ENCODE measurements at regions of chr5 and their contacts with region 1.

Region 1: GRCh38 chr5:55994574-55995333 is at the start of gene IL6ST:
- DNase-seq: peak; percentile 78
- ATAC-seq: peak; percentile 91
- H3K4me3 ChIP-seq: peak within 1 kb of the TSS; percentile 93
- H3K27ac ChIP-seq: peak within 1 kb of the TSS; percentile 93
- H3K4me1 ChIP-seq: no peaks in the 10 kb centered on the region; the same call in none of the 2 replicates
- H3K27me3 ChIP-seq: no peaks in the 10 kb centered on the region
- CTCF ChIP-seq: peak in 1 of 3 experiments; percentile 19; a peak in 1 of 6 replicates
- EP300 ChIP-seq: no peak
- POLR2A ChIP-seq: peak; percentile 88
- RAD21 ChIP-seq: no peak
- polyA plus RNA-seq, gene IL6ST: 1.5 to 1.8 TPM

Region 2: DNA sequence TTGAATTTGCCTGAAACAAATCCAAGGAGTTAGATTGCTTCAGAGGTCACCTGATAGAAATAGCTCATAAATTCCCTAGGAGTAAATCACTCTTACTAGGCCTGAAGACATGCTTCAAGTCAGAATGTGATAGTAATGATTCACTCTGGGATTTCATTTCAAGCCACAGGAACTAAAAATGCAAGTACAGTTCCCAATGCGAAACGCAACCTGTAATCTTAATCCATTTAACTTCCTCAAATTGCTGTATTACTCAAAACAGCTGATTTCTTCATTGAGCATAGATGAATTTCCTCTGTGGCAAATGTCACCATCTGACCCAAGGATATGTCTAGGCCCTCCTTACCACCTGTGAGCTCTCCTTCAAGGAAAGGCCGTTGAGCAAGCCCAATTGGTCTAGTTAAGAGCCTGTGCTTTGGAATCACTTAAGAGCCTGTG is 32.1 kb after region 1 on chr5:
- CTCF ChIA-PET with region 1: interaction called, 3 read pairs
- POLR2A ChIA-PET with region 1: interaction called, 10 read pairs
- RAD21 ChIA-PET with region 1: interaction called, 8 read pairs
- SMC1A ChIA-PET with region 1: interaction called, 3 read pairs
- in situ Hi-C with region 1: no loop called
- intact Hi-C with region 1: loop called (anchors 1 kb)
- DNase-seq: peak; percentile 89
- ATAC-seq: peak; percentile 83
- H3K4me3 ChIP-seq: no peak overlapping the region
- H3K27ac ChIP-seq: no peak overlapping the region
- H3K4me1 ChIP-seq: peaks cover 19% of the 10 kb centered on the region
- H3K27me3 ChIP-seq: no peaks in the 10 kb centered on the region
- CTCF ChIP-seq: no peak
- EP300 ChIP-seq: peak; percentile 89 to 96
- POLR2A ChIP-seq: no peak
- RAD21 ChIP-seq: no peak

Region 3: DNA sequence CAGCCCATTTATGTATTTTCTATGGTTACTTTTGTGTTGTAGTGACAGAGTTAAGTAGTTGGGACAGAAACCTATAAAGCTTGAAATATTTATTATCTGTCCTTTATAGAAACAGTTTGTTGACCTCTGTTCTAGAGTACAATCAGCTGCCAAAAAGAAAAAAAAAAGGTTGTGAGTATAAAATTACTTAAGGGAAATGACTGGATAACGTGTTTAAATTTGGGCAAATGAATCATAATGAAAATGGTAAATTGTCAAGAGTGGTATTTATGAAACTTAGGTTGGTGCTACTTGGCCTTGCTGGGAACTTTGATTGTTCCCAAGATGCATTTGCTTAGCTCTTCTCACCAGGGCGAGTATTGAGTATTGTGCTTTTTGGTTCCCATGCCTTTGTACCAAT is 70.2 kb after region 1 on chr5:
- CTCF ChIA-PET with region 1: interaction called, 7 read pairs
- POLR2A ChIA-PET with region 1: interaction called, 10 read pairs
- RAD21 ChIA-PET with region 1: interaction called, 77 read pairs
- SMC1A ChIA-PET with region 1: interaction called, 30 read pairs
- in situ Hi-C with region 1: no loop called
- intact Hi-C with region 1: no loop called
- DNase-seq: peak; percentile 95
- ATAC-seq: peak; percentile 68
- H3K4me3 ChIP-seq: no peak overlapping the region
- H3K27ac ChIP-seq: peak overlapping the region; percentile 28
- H3K4me1 ChIP-seq: peaks cover 16% of the 10 kb centered on the region
- H3K27me3 ChIP-seq: no peaks in the 10 kb centered on the region
- CTCF ChIP-seq: no peak
- EP300 ChIP-seq: peak in 1 of 2 experiments; percentile 91; a peak in 2 of 4 replicates
- POLR2A ChIP-seq: no peak
- RAD21 ChIP-seq: no peak

Region 4: GRCh38 chr5:56088967-56089829 is 94.4 kb after region 1 on chr5:
- CTCF ChIA-PET with region 1: interaction called, 3 read pairs
- POLR2A ChIA-PET with region 1: interaction called, 11 read pairs
- RAD21 ChIA-PET with region 1: interaction called, 20 read pairs
- SMC1A ChIA-PET with region 1: interaction called, 25 read pairs
- in situ Hi-C with region 1: no loop called
- intact Hi-C with region 1: no loop called
- DNase-seq: peak; percentile 74
- ATAC-seq: peak; percentile 95
- H3K4me3 ChIP-seq: no peak overlapping the region
- H3K27ac ChIP-seq: peak overlapping the region; percentile 41
- H3K4me1 ChIP-seq: peaks cover 8% of the 10 kb centered on the region
- H3K27me3 ChIP-seq: no peaks in the 10 kb centered on the region
- CTCF ChIP-seq: no peak
- EP300 ChIP-seq: no peak
- POLR2A ChIP-seq: no peak
- RAD21 ChIP-seq: no peak

Region 5: DNA sequence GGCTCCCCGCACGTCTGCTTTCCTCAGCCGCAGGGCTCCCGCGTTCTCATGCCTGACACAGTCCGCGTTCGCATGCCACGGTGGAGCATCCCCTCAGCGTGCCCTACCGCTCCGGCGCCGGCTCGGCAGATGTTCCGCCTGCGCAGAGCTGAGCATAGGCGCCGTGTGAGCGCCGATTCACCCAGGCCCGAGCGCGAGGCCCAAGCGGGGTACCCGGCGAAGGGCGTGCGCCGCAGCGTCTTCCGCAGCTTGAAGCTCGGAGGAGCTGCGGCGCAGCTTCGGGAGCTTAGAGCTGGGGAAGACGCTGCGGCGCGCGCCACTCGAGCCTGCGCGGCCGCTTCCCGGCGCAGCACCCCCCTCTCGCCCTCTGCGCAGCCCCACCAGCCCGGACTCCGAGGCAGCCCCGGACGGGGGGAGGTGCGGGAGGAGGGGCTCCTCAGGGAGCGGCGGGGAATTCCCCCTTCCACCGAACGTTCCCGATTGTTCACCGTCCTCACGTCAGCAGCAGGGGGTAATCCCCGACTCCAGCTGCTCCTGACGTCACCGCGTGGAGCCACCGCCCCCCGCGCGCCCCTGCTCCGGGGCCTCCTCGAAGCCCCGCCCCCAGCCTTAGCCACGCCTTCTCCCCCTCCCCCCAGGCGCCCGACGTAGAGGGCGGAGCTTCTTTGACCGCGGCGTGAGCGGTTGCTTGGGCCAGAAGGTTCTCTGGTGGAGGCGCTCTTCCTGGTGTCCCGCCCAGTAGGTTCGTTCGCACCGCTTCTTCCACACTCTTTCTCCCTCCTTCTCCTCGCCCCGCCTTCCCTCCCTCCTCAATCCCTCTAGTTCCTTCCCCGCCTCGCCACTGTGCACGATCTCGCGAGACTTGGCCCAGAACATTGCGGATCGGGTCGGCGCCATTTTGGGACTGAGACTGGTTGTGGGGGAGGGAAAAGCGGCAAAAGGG is 1178.7 kb after region 1 on chr5 and contains the start of gene GPBP1:
- CTCF ChIA-PET with region 1: no interaction called
- POLR2A ChIA-PET with region 1: no interaction called
- RAD21 ChIA-PET with region 1: no interaction called
- SMC1A ChIA-PET with region 1: interaction called, 3 read pairs
- in situ Hi-C with region 1: loop called (anchors 10 kb)
- intact Hi-C with region 1: no loop called
- DNase-seq: peak; percentile 94
- ATAC-seq: peak; percentile 72
- H3K4me3 ChIP-seq: peak within 1 kb of the TSS; percentile 87
- H3K27ac ChIP-seq: peak within 1 kb of the TSS; percentile 99
- H3K4me1 ChIP-seq: no peaks in the 10 kb centered on the region
- H3K27me3 ChIP-seq: no peaks in the 10 kb centered on the region
- CTCF ChIP-seq: no peak
- EP300 ChIP-seq: peak; percentile 68 to 72; a peak in 2 of 4 replicates
- POLR2A ChIP-seq: peak; percentile 77
- RAD21 ChIP-seq: no peak
- polyA plus RNA-seq, gene GPBP1: 27.0 to 32.5 TPM

Measured in GM12878 (cell line).